CD8-positive, alpha-beta memory T cell (primary cell): ENCODE measurements at regions of chr2 and their contacts with region 1.

Region 1: DNA sequence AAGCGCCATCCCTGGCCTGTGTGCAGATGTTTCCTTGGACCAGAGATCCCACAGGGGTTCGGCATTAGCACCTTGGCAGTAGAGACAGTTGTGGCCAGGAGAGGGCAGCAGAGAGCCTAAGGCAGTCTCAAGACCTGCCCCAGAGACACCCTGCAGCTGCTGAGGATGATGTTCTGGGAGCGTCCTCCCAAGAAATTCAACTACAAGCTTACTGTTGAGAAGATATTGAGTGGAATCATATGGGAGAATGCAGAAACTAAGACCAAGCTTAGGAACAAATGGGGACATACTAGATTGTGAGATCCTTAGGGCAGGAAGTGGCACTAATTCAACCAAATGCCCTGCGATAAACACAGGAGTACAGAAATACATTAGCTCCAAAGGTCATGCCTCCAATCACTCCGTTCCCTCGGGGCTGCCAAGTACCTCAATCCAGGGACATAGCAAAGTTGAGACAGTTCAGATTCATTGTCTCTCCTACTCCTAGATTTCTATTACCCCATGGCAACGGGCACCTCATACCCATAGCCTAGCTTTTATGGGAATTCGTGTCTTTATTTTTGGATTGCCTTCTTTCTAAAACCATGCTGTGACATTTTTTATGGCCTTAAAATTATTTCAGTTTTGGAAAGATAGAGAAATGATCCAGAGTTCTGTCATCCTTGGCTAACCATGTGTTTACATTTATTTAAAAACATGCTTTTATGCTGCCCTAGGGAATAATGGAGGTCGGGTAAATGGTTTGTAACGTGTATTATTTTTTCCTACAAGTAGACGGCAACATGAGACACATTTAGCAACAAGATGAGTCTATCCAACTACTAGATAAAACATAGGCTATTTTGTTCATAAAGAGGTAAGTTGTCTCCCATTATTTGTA is 2.2 kb upstream of the ERMN start:
- DNase-seq: peak; percentile 71 to 89 (median 76)
- H3K4me3 ChIP-seq: no peak overlapping the region
- H3K4me3 Mint-ChIP-seq: peak overlapping the region in 6 of 7 donors; percentile 60 to 87 (median 70)
- H3K27ac ChIP-seq: no peak overlapping the region
- H3K27ac Mint-ChIP-seq: peak overlapping the region in 7 of 8 donors; percentile 35 to 90 (median 85)
- H3K4me1 ChIP-seq: peaks cover 41% of the 10 kb centered on the region
- H3K4me1 Mint-ChIP-seq: peaks cover 47 to 57% (median 55%) of the 10 kb centered on the region in 3 donors
- H3K27me3 ChIP-seq: no peaks in the 10 kb centered on the region
- H3K27me3 Mint-ChIP-seq: no peaks in the 10 kb centered on the region

Region 2: GRCh38 chr2:157269922-157270321 is 57.9 kb before region 1 on chr2:
- CTCF ChIA-PET with region 1: no interaction called
- POLR2A ChIA-PET with region 1: no interaction called
- DNase-seq: no peak
- H3K4me3 ChIP-seq: no peak overlapping the region
- H3K4me3 Mint-ChIP-seq: no peak overlapping the region
- H3K27ac ChIP-seq: no peak overlapping the region
- H3K27ac Mint-ChIP-seq: no peak overlapping the region
- H3K4me1 ChIP-seq: no peaks in the 10 kb centered on the region
- H3K4me1 Mint-ChIP-seq: no peaks in the 10 kb centered on the region
- H3K27me3 ChIP-seq: no peaks in the 10 kb centered on the region
- H3K27me3 Mint-ChIP-seq: peaks cover 1 to 4% of the 10 kb centered on the region in 2 donors

Region 3: DNA sequence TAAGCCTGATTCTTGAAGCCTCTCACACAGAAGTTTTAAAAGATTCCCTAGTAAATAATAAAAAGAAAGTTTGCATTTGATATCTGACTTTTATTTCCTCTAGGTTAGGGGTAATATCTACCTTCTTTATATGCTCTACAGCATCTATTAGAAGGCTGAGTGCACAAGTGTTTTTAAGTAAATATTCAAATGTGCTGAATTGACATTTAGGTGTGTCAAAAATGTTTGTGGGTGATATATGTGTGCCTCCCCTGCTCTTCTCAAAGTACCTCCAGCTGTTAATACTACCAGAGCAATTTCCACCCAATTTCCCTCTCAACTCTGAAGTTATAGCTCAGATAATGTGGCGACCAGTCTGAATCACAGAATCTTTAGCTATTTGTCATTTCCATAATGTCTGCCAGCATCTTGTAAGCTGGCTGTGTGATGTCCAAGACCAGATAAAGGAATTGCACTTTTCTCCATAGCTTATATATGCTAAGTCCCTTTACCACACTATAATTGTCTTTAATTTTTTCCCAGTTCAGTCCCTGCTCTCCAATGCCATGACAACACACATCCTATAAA is 22.2 kb after region 1 on chr2:
- CTCF ChIA-PET with region 1: interaction called, 16 read pairs
- POLR2A ChIA-PET with region 1: no interaction called
- DNase-seq: no peak
- H3K4me3 ChIP-seq: no peak overlapping the region
- H3K4me3 Mint-ChIP-seq: no peak overlapping the region
- H3K27ac ChIP-seq: no peak overlapping the region
- H3K27ac Mint-ChIP-seq: peak overlapping the region in 1 of 8 donors; percentile 24
- H3K4me1 ChIP-seq: no peaks in the 10 kb centered on the region
- H3K4me1 Mint-ChIP-seq: peaks cover 15 to 44% (median 40%) of the 10 kb centered on the region in 3 donors
- H3K27me3 ChIP-seq: no peaks in the 10 kb centered on the region
- H3K27me3 Mint-ChIP-seq: no peaks in the 10 kb centered on the region

Region 4: DNA sequence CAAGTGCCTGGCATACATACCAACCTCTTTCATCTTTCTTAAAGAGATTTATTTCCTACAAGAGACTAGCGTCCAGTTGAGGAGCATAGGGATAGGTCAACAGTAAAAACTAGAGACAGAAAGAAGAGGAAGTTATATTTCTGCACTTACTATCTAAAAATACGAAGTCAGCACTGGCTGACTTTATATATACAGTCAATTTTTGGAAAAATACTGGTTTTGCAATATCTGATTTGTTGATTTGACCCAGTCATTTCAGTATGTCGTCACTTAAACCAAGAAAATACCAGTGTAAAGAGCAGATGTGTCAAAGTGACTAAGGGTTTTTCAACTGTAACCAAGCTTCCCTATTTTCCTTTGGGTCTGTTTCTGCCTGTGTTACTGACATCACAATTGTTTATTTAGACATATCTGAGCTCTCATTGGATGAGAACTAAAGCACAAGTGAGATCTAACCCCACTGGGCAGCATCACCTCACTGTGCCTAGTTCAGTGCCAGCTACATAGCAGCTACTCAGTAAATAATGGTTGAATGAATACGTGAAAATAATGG is 93.0 kb after region 1 on chr2:
- CTCF ChIA-PET with region 1: interaction called, 23 read pairs
- POLR2A ChIA-PET with region 1: interaction called, 6 read pairs
- DNase-seq: no peak
- H3K4me3 ChIP-seq: no peak overlapping the region
- H3K4me3 Mint-ChIP-seq: peak overlapping the region; percentile 27 to 65 (median 54)
- H3K27ac ChIP-seq: no peak overlapping the region
- H3K27ac Mint-ChIP-seq: peak overlapping the region; percentile 83 to 97 (median 91)
- H3K4me1 ChIP-seq: peaks cover 65% of the 10 kb centered on the region
- H3K4me1 Mint-ChIP-seq: peaks cover 74 to 88% (median 88%) of the 10 kb centered on the region in 3 donors
- H3K27me3 ChIP-seq: no peaks in the 10 kb centered on the region
- H3K27me3 Mint-ChIP-seq: peaks cover 0 to 1% of the 10 kb centered on the region in 2 donors

Region 5: GRCh38 chr2:157460384-157460837 is 132.6 kb after region 1 on chr2:
- CTCF ChIA-PET with region 1: interaction called, 68 read pairs
- POLR2A ChIA-PET with region 1: interaction called, 3 read pairs
- DNase-seq: no peak
- H3K4me3 ChIP-seq: no peak overlapping the region
- H3K4me3 Mint-ChIP-seq: peak overlapping the region in 1 of 7 donors; percentile 29
- H3K27ac ChIP-seq: no peak overlapping the region
- H3K27ac Mint-ChIP-seq: peak overlapping the region in 5 of 8 donors; percentile 2 to 30 (median 22)
- H3K4me1 ChIP-seq: peaks cover 66% of the 10 kb centered on the region
- H3K4me1 Mint-ChIP-seq: peaks cover 33 to 56% (median 47%) of the 10 kb centered on the region in 3 donors
- H3K27me3 ChIP-seq: no peaks in the 10 kb centered on the region
- H3K27me3 Mint-ChIP-seq: no peaks in the 10 kb centered on the region

Region 6: DNA sequence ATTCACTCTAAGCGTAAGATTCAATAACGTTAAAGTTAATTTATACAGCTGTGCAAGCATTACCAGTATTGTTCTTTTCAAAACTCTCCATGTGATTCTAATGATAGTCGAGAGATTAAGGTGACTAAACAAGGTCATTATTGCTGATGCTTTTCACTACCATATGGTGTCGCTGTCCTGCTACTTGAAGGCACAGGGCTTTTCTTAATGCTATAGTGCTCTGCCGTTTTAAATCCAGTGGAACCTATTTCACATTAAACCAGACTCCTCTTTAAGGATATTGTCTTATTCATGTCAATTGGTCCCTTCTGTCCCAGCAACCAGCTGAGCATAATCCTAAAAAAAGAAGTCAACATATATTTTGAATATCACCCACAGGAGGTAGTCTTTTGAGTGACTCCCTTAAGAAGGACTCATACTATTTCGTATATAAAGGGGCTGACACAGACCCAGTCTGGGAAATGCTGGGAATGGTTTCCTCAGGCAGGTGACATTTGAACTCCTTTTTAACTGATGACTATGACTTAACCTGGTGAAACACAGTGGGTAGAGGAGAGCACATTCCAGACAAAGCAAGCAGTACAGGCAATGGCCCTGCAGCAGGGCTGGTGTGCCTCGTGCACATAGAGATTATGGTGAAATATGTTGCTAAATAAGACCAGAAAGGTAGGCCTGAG is 169.9 kb after region 1 on chr2:
- CTCF ChIA-PET with region 1: interaction called, 60 read pairs
- POLR2A ChIA-PET with region 1: no interaction called
- DNase-seq: peak in 2 of 5 donors; percentile 28 to 46
- H3K4me3 ChIP-seq: no peak overlapping the region
- H3K4me3 Mint-ChIP-seq: no peak overlapping the region
- H3K27ac ChIP-seq: no peak overlapping the region
- H3K27ac Mint-ChIP-seq: no peak overlapping the region
- H3K4me1 ChIP-seq: peaks cover under 1% of the 10 kb centered on the region
- H3K4me1 Mint-ChIP-seq: peaks cover 19 to 30% (median 25%) of the 10 kb centered on the region in 3 donors
- H3K27me3 ChIP-seq: no peaks in the 10 kb centered on the region
- H3K27me3 Mint-ChIP-seq: peaks cover 0 to 1% of the 10 kb centered on the region in 2 donors